GM10248 (cell line): ENCODE measurements at regions of chr7 and their contacts with region 1.

Region 1: GRCh38 chr7:106736508-106737201 is 75.7 kb upstream of the CCDC71L start:
- DNase-seq: peak; percentile 53
- CTCF ChIP-seq: peak; percentile 59

Region 2: DNA sequence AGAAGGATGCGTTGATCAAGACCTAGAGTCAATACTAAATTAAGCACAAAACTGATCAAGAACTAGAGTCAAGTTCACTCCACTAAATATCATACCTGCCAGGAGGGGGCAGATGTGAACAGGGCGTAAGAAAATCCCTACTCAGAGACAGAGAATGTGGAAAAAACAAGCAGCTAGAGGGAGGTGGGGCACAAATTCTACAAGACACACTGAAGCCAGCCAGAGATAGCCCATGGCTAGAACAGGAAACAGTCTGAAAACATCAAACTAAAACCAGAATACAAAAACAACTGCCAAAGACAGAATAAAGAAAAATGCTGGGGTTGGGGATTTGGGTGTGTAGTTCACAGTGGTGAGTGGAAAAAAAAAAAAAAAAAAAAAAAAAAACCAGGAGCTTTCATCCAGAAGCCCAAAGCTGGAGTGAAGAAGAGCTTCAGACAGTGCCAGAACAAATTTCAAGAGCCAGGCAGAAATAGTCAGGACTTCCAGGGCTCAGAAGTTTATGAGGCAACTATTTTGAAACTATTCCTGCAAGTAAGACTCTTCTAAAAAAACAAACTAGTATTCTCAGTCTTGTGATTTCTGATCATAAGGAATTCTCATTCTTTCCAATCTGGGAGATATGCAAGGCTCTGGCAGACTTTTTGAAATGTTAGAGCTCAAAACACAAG is 194.0 kb before region 1 on chr7:
- CTCF ChIA-PET with region 1: interaction called, 69 read pairs
- POLR2A ChIA-PET with region 1: no interaction called
- DNase-seq: peak; percentile 64
- CTCF ChIP-seq: peak; percentile 41

Region 3: GRCh38 chr7:106552645-106553445 is 183.8 kb before region 1 on chr7:
- CTCF ChIA-PET with region 1: interaction called, 13 read pairs
- POLR2A ChIA-PET with region 1: no interaction called
- DNase-seq: peak; percentile 75
- CTCF ChIP-seq: no peak

Region 4: GRCh38 chr7:106679153-106679931 is 57.3 kb before region 1 on chr7:
- CTCF ChIA-PET with region 1: interaction called, 10 read pairs
- POLR2A ChIA-PET with region 1: no interaction called
- DNase-seq: peak; percentile 29
- CTCF ChIP-seq: no peak

Region 5: DNA sequence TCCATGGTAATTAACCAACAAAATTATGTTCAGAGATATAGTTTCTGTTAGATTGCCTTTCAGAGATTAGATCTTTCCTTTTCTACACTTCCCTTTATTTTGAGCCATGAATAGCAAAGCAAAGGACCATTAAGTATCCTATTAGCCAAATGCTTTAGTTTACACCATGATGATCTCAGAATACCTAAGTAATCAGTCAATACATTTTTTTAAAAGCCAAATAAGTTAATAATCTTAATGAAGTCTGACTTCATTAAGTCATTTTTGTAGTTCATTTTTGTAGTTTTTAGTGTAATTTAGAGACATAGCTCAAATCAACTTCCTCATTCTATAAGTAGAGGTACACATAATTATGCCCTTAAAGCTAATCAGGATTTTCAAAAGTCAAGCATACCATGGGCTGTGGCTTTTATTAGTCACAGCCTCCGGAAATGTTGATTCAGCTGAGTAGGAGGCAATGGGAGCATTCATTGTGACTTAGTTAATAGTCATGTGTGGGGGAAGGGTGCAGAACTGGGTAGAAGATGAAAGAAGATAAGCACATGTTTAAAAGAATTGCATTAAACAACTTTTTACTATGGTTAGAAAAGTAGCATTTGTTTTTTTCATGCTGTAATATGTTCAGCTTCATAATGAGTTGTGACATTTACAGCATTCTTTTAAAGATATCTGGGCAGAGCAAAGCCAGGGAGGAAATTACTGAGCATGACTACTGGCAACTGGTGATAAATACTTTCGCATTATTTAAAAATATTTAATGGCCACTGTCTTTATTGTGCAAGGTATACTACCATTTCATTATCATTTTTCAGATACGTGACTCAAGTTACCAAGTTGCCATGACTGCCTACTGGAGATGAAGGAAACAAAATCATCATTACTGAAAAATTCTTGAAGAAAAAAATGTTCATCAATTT is 18.4 kb before region 1 on chr7:
- CTCF ChIA-PET with region 1: interaction called, 26 read pairs
- POLR2A ChIA-PET with region 1: no interaction called
- DNase-seq: peak; percentile 43
- CTCF ChIP-seq: no peak

Region 6: GRCh38 chr7:106812027-106812643 is 75.5 kb after region 1 on chr7:
- CTCF ChIA-PET with region 1: no interaction called
- POLR2A ChIA-PET with region 1: no interaction called
- DNase-seq: no peak
- CTCF ChIP-seq: no peak